Dendritic cell treated with granulocyte-macrophage colony-stimulating factor and Interleukin-4, amounts not matched to agents 40 ng/mL and 50 ng/mL, for 4 days (primary cell): ENCODE measurements at regions of chr9 and their contacts with region 1.

Region 1: GRCh38 chr9:36190388-36191287 is at the start of gene CLTA:
- H3K4me3 Mint-ChIP-seq: peak within 1 kb of the TSS; percentile 84
- H3K27ac Mint-ChIP-seq: peak within 1 kb of the TSS; percentile 93
- H3K4me1 Mint-ChIP-seq: peaks cover 57% of the 10 kb centered on the region
- H3K27me3 Mint-ChIP-seq: peaks cover 6% of the 10 kb centered on the region

Region 2: GRCh38 chr9:36158122-36158521 is 32.5 kb before region 1 on chr9:
- intact Hi-C with region 1: no loop called
- H3K4me3 Mint-ChIP-seq: no peak overlapping the region
- H3K27ac Mint-ChIP-seq: peak overlapping the region; percentile 81
- H3K4me1 Mint-ChIP-seq: peaks cover 62% of the 10 kb centered on the region
- H3K27me3 Mint-ChIP-seq: no peaks in the 10 kb centered on the region

Region 3: GRCh38 chr9:36258208-36258988 is 67.8 kb after region 1 on chr9 and contains the start of gene GNE:
- intact Hi-C with region 1: loop called (anchors 5 kb)
- H3K4me3 Mint-ChIP-seq: peak within 1 kb of the TSS; percentile 92
- H3K27ac Mint-ChIP-seq: peak within 1 kb of the TSS; percentile 96
- H3K4me1 Mint-ChIP-seq: peaks cover 15% of the 10 kb centered on the region
- H3K27me3 Mint-ChIP-seq: no peaks in the 10 kb centered on the region